ENCODE measurements at regions of chr13 and their contacts with region 1.

Region 1: GRCh38 chr13:102800145-102801041 is 1.5 kb downstream of the BIVM start:
- DNase-seq: peak; percentile 86
- ATAC-seq: peak; percentile 72
- H3K4me3 Mint-ChIP-seq: peak overlapping the region; percentile 97
- H3K27ac Mint-ChIP-seq: no peak overlapping the region
- H3K4me1 Mint-ChIP-seq: peaks cover 9% of the 10 kb centered on the region; the same call in 1 of the 2 replicates
- H3K27me3 Mint-ChIP-seq: peaks cover 18% of the 10 kb centered on the region
- CTCF ChIP-seq: peak; percentile 61

Region 2: DNA sequence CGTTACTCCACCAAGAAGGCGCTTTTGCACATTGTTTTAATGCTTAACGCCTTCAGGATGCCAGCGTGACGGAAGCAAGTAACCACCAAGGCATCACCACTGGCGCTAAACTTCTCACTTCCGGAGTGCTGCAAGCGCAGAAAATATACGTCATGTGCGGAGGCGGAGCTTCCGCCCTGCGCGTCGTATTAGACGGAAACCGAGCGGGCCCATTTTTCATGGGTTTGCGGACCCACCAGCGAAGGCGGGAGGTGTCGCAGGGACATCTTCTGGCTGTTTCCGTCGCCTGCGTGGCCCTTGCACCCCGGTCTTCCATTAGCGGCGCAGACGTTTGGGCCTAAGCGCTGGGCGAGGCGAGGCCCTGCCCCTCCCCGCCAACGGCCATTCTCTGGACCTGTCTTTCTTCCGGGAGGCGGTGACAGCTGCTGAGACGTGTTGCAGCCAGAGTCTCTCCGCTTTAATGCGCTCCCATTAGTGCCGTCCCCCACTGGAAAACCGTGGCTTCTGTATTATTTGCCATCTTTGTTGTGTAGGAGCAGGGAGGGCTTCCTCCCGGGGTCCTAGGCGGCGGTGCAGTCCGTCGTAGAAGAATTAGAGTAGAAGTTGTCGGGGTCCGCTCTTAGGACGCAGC is 45.4 kb after region 1 on chr13 and contains the start of gene ERCC5:
- CTCF ChIA-PET with region 1: interaction called, 16 read pairs
- POLR2A ChIA-PET with region 1: interaction called, 5 read pairs
- DNase-seq: peak; percentile 90
- ATAC-seq: peak; percentile 82
- H3K4me3 Mint-ChIP-seq: peak within 1 kb of the TSS; percentile 95
- H3K27ac Mint-ChIP-seq: peak within 1 kb of the TSS; percentile 95
- H3K4me1 Mint-ChIP-seq: peaks cover 12% of the 10 kb centered on the region
- H3K27me3 Mint-ChIP-seq: no peaks in the 10 kb centered on the region
- CTCF ChIP-seq: no peak
- total RNA-seq, gene ERCC5: 15.6 to 26.5 TPM (median 20.3 TPM) in 3 replicates

Measured in WTC11 (cell line).